ENCODE measurements at regions of chr5 and their contacts with region 1.

Region 1: DNA sequence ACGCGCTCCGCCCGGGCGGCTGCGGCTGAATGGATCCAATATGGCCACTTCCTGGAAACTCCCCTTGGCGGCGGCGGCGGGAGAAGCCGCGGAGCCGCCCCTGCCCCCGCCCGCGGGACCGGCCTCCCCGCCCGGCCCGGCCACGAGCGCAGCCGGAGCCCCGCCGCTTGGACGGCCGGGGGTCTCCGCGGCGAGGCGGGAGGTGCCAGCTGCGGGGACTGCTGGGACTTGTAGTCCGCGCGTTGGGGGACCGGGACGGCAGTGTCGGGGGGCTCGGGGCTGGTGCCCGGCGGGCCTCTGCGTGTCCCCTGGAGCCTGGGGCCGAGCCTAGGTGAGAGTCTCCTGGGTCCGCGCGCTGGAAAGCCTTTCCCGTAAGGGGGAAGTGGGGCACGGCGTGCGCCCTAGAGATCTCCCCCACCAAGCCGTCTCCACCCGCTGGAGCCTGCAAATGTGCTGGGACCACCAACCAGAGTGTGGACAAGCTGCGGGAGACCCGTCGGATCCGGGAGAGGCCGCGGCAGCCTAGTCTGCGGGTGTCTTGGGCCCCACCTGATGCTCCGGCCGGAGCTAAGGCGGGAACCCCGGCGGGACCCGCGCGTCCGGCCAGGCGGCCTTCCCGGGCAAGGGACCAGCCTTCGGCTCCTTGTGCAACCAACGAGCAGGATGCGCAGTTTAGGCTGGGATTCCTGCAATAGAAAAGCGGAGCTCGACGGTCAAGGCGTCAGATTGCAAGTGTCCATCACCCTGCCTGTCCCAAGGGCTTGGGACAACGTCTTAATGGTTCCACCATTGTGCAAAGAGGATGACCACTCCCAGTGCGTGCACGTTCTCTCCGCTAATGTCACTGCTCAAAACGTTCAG is at the start of gene SEPTIN8:
- DNase-seq: peak; percentile 88
- H3K4me3 Mint-ChIP-seq: peak within 1 kb of the TSS; percentile 87
- H3K27ac Mint-ChIP-seq: peak within 1 kb of the TSS; percentile 82
- H3K4me1 Mint-ChIP-seq: peaks cover 46% of the 10 kb centered on the region
- H3K27me3 Mint-ChIP-seq: peaks cover 44% of the 10 kb centered on the region
- total RNA-seq, gene SEPTIN8: 43.8 and 45.4 TPM in 2 replicates

Region 2: DNA sequence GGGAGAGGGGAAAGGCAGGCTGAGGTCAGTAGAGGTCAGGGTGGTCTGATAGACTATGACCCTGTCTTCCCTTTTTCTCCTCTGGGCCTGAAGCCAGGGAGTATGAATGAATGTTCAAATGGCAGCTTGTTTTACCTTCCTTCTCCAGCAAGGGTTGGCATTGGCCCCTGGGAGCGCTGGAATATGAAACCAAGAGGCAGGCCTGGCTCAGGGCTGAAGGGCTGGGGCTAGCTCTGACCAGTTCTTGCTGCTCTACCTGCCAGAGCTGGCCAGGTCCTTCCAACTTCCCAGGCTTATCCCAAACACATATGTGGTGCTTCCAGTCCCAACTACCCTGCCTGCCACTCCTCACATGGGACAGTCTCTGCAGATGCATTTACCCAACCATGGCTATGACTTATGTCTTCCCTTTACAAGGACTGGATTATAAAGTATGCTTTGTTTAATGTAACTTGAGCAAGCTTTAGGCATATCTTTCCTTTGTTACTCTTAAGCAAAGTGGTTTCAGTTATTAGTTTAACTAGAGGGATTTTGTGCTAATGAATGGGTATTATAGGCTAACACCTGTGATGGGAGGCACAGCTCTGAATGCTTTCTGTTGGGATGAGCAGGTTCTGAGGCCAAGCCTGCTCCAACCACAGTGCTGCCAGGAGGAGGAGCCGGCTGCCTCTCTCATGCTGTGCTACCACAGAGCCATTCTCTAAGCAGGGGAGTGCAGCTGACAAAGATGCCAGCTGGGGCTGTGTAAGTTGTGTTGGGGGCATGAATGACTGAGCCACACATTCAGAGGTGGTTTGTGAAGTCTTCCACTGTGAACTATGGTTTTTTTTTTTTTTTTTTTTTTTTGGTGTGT is 24.1 kb before region 1 on chr5:
- intact Hi-C with region 1: loop called (anchors 2 kb)
- DNase-seq: peak; percentile 74
- H3K4me3 Mint-ChIP-seq: no peak overlapping the region
- H3K27ac Mint-ChIP-seq: peak overlapping the region; percentile 82
- H3K4me1 Mint-ChIP-seq: peaks cover 57% of the 10 kb centered on the region
- H3K27me3 Mint-ChIP-seq: no peaks in the 10 kb centered on the region

Region 3: GRCh38 chr5:133123297-133123696 is 345.9 kb after region 1 on chr5:
- intact Hi-C with region 1: no loop called
- DNase-seq: no peak
- H3K4me3 Mint-ChIP-seq: no peak overlapping the region
- H3K27ac Mint-ChIP-seq: no peak overlapping the region
- H3K4me1 Mint-ChIP-seq: no peaks in the 10 kb centered on the region
- H3K27me3 Mint-ChIP-seq: peaks cover 4% of the 10 kb centered on the region

Measured in activated CD4-positive, alpha-beta T cell treated with anti-CD3 and anti-CD28 coated beads, Interleukin-2, amount 10 ng/mL, durations not matched to agents 24 days and 14 days (primary cell).